A673 (cell line): ENCODE measurements at regions of chr20 and their contacts with region 1.

Region 1: DNA sequence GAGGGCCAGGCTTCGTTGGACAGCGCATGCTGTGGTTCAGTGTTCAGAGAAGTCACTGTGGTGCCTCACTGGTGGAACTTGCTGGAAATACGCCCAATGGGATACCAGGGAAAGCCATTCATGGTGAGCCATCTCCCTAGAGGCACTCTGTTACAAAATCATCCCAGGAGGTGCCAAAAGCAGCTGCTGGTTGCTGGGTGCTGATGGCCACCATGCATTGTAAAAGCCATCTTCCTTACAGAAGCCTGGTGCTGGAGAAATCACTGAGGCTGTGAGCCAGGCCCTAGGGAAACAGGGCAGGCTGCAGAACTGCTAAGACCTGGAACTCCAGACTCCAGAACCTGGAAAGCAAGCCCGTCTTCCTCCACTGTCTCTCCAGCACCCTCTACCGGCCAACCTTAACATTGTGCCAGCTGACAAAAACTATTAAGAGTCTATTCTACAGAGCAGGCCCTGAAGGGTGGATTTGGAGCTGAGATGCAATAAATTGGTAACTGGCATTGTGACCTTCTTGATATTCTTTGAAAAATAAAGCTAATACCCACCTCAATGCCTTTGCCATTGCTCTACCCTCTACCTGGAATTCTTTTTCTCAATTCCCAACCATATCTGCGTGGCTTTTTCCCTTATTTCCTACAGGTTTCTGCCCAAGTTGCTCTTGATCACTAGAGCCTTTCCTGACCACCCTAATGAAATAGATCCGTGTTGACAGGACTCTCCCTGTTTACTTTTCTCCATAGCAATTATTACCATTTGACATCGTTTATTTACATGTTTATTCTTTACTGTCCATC is 18.5 kb downstream of the SNRPB start:
- DNase-seq: peak; percentile 85
- H3K4me3 ChIP-seq: no peak overlapping the region
- H3K27ac ChIP-seq: no peak overlapping the region
- H3K4me1 ChIP-seq: no peaks in the 10 kb centered on the region
- H3K27me3 ChIP-seq: no peaks in the 10 kb centered on the region
- CTCF ChIP-seq: peak; percentile 92

Region 2: DNA sequence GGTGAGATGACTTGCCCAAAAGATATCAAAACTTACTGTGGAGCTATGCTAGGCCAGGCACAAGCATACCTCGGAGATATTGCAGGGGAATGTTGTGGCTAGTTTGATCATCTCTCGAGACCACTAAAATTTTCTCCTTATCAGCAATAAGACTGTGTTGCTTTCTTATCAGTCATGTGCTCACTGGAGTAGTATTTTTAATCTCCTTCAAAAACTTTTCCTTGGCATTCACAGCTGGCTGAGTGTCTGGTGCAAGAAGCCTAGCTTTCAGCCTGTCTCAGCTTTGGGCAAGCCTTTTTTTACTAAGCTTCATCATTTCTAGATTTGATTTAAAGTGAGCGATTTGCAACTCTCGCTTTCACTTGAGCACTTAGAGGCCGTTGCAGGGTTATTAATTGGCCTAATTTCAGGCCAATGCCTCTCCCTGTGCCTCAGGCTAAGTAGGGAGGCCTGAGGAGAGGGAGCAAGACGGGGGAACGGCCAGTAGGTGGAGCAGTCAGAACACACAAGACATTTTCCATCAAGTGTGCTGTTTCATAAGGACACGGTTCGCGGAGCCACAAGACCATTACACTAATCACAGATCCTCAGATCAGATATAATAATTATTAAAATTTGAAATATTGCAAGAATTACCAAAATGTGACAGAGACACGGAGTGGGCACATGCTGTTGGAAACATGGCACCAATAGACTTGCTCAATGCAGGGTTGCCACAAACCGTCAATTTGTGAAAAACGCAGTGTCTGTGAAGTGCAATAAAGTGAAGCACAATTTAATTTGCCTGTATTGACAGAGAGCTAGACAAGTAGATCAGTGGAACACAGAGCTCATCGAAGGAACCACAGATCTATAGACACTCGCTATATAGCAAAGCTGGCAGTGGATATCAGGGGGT is 687.8 kb before region 1 on chr20:
- CTCF ChIA-PET with region 1: no interaction called
- POLR2A ChIA-PET with region 1: no interaction called
- intact Hi-C with region 1: loop called (anchors 2 kb)
- DNase-seq: peak; percentile 85
- H3K4me3 ChIP-seq: peak overlapping the region; percentile 14
- H3K27ac ChIP-seq: no peak overlapping the region
- H3K4me1 ChIP-seq: no peaks in the 10 kb centered on the region
- H3K27me3 ChIP-seq: no peaks in the 10 kb centered on the region
- CTCF ChIP-seq: peak; percentile 84

Region 3: DNA sequence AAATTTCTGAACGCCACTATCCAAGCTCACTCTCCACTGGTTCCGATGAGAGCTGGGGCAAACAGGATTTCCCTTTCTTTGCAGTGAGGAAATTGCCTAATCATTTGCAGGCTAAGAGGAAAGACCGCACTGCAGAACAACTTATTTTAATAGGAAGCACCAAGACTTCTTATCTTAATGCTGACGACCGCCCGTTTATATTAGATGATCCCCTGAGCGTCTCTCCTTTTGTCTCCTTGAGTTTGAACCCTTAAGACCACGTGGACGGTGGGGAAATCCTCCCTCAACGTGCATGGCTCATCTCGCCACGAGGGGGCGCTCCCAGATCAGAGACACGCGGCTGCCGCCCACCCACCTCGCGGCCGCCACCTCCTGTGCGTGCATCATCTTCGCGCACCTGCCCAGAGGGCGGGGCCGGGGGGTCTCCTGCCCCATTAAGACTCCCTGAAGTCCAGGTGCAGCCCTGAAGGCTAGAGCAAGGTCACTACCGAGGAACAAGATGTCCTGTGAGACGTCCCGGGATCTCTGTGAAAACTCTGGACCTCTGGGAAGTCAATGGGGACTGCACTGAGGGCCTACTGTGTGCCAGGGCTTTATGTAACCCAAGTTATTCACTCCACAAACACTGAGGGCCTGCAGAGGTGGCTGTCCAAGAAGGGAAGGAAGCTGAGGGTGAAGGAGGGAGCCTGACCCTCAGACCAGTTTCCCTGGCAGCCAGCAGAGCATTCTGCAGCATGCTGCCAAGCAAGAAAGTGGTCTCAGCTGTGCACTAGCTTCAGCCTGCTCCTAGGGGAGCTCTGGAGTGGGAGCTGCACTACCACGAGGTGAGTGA is 486.4 kb before region 1 on chr20:
- CTCF ChIA-PET with region 1: interaction called, 3 read pairs
- POLR2A ChIA-PET with region 1: no interaction called
- intact Hi-C with region 1: loop called (anchors 10 kb)
- DNase-seq: peak; percentile 90
- H3K4me3 ChIP-seq: no peak overlapping the region
- H3K27ac ChIP-seq: peak overlapping the region; percentile 42
- H3K4me1 ChIP-seq: peaks cover 24% of the 10 kb centered on the region
- H3K27me3 ChIP-seq: no peaks in the 10 kb centered on the region
- CTCF ChIP-seq: peak; percentile 99

Region 4: GRCh38 chr20:2206957-2207769 is 245.0 kb before region 1 on chr20:
- CTCF ChIA-PET with region 1: interaction called, 13 read pairs
- POLR2A ChIA-PET with region 1: no interaction called
- intact Hi-C with region 1: loop called (anchors 5 kb)
- DNase-seq: peak; percentile 77
- H3K4me3 ChIP-seq: peak overlapping the region; percentile 59
- H3K27ac ChIP-seq: no peak overlapping the region
- H3K4me1 ChIP-seq: no peaks in the 10 kb centered on the region
- H3K27me3 ChIP-seq: peaks cover 4% of the 10 kb centered on the region
- CTCF ChIP-seq: peak; percentile 82

Region 5: DNA sequence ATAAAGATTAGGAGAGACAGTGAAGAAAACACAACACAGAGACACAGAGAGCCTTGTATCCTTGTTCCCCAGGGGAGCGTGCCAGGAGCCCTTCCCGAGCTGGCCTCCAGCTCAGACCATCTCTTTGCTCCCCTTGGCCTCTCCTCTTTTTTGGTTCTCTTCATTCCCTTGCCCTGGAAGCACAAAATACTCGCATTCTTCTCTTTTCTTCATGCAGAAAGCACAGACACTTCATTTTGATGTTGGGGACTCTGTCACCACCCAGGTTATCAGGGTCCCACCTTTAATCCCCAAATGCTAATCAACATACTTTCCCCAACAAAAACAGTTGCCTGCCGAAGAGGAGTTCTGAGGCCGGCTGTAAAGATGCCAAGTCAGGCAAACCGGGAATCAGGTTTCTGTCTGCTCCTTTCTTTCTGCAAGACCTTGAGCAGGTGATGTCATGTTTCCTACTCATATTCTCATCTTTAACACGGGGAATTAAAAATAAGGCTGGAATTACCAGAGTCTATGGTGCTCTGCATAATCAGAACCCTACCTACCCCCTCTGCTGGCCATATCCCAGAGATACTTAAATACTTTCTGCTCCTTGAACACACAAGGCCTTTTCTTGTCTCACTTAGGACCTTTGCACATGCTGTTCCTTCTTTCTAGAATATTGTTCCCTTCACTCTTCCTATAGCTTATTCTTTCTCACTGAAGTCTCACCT is 49.7 kb before region 1 on chr20:
- CTCF ChIA-PET with region 1: no interaction called
- POLR2A ChIA-PET with region 1: no interaction called
- intact Hi-C with region 1: loop called (anchors 1 kb)
- DNase-seq: peak; percentile 37
- H3K4me3 ChIP-seq: no peak overlapping the region
- H3K27ac ChIP-seq: no peak overlapping the region
- H3K4me1 ChIP-seq: no peaks in the 10 kb centered on the region
- H3K27me3 ChIP-seq: no peaks in the 10 kb centered on the region
- CTCF ChIP-seq: peak; percentile 50; the same call in 1 of the 2 replicates

Region 6: GRCh38 chr20:2538931-2539720 is 87.0 kb after region 1 on chr20:
- CTCF ChIA-PET with region 1: no interaction called
- POLR2A ChIA-PET with region 1: no interaction called
- intact Hi-C with region 1: no loop called
- DNase-seq: no peak
- H3K4me3 ChIP-seq: no peak overlapping the region
- H3K27ac ChIP-seq: no peak overlapping the region
- H3K4me1 ChIP-seq: no peaks in the 10 kb centered on the region
- H3K27me3 ChIP-seq: no peaks in the 10 kb centered on the region
- CTCF ChIP-seq: no peak